Heart left ventricle (tissue), 16 donors: ENCODE measurements at regions of chr15 and their contacts with region 1.

Region 1: GRCh38 chr15:40906091-40906990 is 12.1 kb downstream of the VPS18 start:
- DNase-seq: peak; percentile 93 to 95 (median 93)
- ATAC-seq: peak; percentile 83 to 90 (median 86)
- H3K4me3 ChIP-seq: peak overlapping the region; percentile 1 to 66 (median 56)
- H3K27ac ChIP-seq: peak overlapping the region; percentile 87 to 100 (median 96)
- H3K4me1 ChIP-seq: peaks cover 4 to 76% (median 43%) of the 10 kb centered on the region in 12 donors
- H3K27me3 ChIP-seq: no peaks in the 10 kb centered on the region
- CTCF ChIP-seq: peak; percentile 72 to 96 (median 88)
- POLR2A ChIP-seq: peak in 1 of 2 donors; percentile 56

Region 2: GRCh38 chr15:40843885-40844695 is 62.3 kb before region 1 on chr15 and contains the start of gene SPINT1:
- intact Hi-C with region 1: no loop called
- DNase-seq: peak in 1 of 5 donors; percentile 61
- ATAC-seq: peak in 2 of 4 donors; percentile 26 to 34
- H3K4me3 ChIP-seq: peak within 1 kb of the TSS; percentile 26 to 68 (median 50)
- H3K27ac ChIP-seq: no peak within 1 kb of the TSS
- H3K4me1 ChIP-seq: peaks cover 0 to 37% (median 10%) of the 10 kb centered on the region in 12 donors
- H3K27me3 ChIP-seq: peaks cover 9 to 40% (median 19%) of the 10 kb centered on the region in 9 donors
- CTCF ChIP-seq: no peak
- POLR2A ChIP-seq: no peak
- total RNA-seq, gene SPINT1: 0.20 to 3.4 (median 0.76) TPM in 8 of 9 donors, not detected in the other

Region 3: DNA sequence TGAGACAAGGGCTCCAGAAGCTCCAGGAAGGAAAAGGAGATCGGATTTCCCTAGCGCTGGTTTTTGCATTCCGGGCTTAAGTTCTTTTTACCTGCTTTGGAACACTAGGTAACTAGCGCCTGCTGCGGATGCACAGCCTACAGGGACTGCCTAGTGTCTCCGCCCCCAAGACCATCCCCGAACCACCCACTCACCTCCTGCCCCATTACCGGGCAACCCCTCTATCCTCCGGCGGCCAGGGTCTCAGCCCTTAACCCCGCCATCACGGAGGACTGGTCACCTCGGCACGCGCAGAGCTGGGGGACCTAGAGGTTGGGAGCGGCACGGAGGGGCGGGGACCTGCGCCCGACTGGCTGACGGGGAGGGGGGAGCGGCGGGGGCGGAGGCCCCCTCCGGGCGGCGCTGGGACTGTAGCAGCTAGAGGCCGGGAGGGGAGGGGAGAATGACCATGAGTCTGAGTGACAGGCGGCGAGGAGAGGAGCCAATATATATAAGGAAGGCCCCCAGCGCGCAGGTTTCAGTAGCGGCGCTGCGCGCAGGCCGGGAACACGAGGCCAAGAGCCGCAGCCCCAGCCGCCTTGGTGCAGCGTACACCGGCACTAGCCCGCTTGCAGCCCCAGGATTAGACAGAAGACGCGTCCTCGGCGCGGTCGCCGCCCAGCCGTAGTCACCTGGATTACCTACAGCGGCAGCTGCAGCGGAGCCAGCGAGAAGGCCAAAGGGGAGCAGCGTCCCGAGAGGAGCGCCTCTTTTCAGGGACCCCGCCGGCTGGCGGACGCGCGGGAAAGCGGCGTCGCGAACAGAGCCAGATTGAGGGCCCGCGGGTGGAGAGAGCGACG is 22.7 kb after region 1 on chr15 and contains the start of gene DLL4:
- intact Hi-C with region 1: loop called in 5 of 10 experiments (anchors 1 to 2 kb)
- DNase-seq: peak; percentile 74 to 88 (median 82)
- ATAC-seq: peak; percentile 61 to 78 (median 65)
- H3K4me3 ChIP-seq: peak within 1 kb of the TSS; percentile 22 to 85 (median 70)
- H3K27ac ChIP-seq: peak within 1 kb of the TSS; percentile 51 to 90 (median 77)
- H3K4me1 ChIP-seq: peaks cover 3 to 80% (median 54%) of the 10 kb centered on the region in 12 donors
- H3K27me3 ChIP-seq: peaks cover 3 to 79% (median 23%) of the 10 kb centered on the region in 9 donors
- CTCF ChIP-seq: peak in 1 of 12 donors; percentile 11
- POLR2A ChIP-seq: peak in 1 of 2 donors; percentile 95
- total RNA-seq, gene DLL4: 4.7 to 20.8 (median 13.5) TPM

Region 4: GRCh38 chr15:40941528-40942336 is 35.4 kb after region 1 on chr15:
- intact Hi-C with region 1: loop called in 8 of 10 experiments (anchors 1 to 5 kb)
- DNase-seq: peak; percentile 86 to 92 (median 87)
- ATAC-seq: peak; percentile 22 to 83 (median 79)
- H3K4me3 ChIP-seq: peak overlapping the region; percentile 41 to 70 (median 59)
- H3K27ac ChIP-seq: peak overlapping the region; percentile 83 to 96 (median 92)
- H3K4me1 ChIP-seq: peaks cover 7 to 60% (median 48%) of the 10 kb centered on the region in 12 donors
- H3K27me3 ChIP-seq: no peaks in the 10 kb centered on the region
- CTCF ChIP-seq: peak; percentile 29 to 96 (median 67)
- POLR2A ChIP-seq: no peak

Region 5: GRCh38 chr15:41022487-41023090 is 116.2 kb after region 1 on chr15:
- intact Hi-C with region 1: loop called (anchors 1 to 2 kb)
- DNase-seq: peak in 2 of 5 donors; percentile 22 to 36
- ATAC-seq: peak in 3 of 4 donors; percentile 57 to 78 (median 77)
- H3K4me3 ChIP-seq: no peak overlapping the region
- H3K27ac ChIP-seq: no peak overlapping the region
- H3K4me1 ChIP-seq: peaks cover 0 to 48% (median 20%) of the 10 kb centered on the region in 12 donors
- H3K27me3 ChIP-seq: no peaks in the 10 kb centered on the region
- CTCF ChIP-seq: peak; percentile 46 to 82 (median 70)
- POLR2A ChIP-seq: no peak

Region 6: GRCh38 chr15:41061667-41062066 is 155.3 kb after region 1 on chr15:
- intact Hi-C with region 1: no loop called
- DNase-seq: no peak
- ATAC-seq: no peak
- H3K4me3 ChIP-seq: no peak overlapping the region
- H3K27ac ChIP-seq: no peak overlapping the region
- H3K4me1 ChIP-seq: no peaks in the 10 kb centered on the region
- H3K27me3 ChIP-seq: no peaks in the 10 kb centered on the region
- CTCF ChIP-seq: no peak
- POLR2A ChIP-seq: no peak

Region 7: DNA sequence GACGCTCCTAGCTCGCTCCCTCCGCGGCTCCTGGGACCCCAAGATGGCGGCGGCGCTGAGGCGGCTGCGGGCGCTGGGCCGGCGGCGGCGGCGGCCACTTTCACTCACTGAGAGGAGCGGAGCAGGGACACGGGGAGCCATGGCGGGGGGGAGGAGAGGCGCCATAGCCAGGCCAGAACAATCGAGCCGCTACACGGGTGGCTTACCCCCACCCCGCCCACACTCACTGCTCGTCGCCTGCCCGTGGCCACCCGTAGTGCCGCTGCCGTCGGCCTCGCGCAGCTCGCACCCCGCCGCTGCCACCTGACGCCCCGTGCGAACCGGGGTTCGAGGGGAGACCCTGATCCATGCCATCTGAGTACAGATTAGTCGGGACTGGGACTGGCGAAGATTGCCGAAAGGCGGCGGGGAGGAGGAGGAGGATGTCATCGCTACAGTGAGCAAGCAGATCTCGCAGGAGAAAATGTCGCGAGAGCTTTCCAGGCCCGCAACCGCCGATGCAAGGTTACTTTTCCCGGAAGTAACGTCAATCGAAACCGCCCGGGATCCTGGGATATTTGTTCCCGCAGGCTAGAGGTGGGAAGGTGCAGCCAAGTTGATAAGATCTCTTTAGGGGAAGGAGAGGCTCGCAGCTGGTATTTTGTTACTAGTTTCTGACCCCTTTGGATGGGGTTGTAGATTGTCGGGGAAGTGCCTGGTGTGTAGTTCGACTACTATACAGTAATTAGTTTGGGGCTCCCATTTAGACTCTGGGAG is 210.0 kb after region 1 on chr15 and contains the start of gene INO80:
- intact Hi-C with region 1: loop called in 4 of 10 experiments (anchors 10 kb)
- DNase-seq: peak; percentile 97 to 100 (median 99)
- ATAC-seq: peak; percentile 95 to 98 (median 96)
- H3K4me3 ChIP-seq: peak within 1 kb of the TSS; percentile 72 to 98 (median 84)
- H3K27ac ChIP-seq: peak within 1 kb of the TSS; percentile 91 to 100 (median 100)
- H3K4me1 ChIP-seq: peaks cover 0 to 24% (median 18%) of the 10 kb centered on the region in 12 donors
- H3K27me3 ChIP-seq: no peaks in the 10 kb centered on the region
- CTCF ChIP-seq: peak in 1 of 12 donors; percentile 18
- POLR2A ChIP-seq: peak in 1 of 2 donors; percentile 77
- total RNA-seq, gene INO80: 9.7 to 20.9 (median 12.6) TPM

Region 8: DNA sequence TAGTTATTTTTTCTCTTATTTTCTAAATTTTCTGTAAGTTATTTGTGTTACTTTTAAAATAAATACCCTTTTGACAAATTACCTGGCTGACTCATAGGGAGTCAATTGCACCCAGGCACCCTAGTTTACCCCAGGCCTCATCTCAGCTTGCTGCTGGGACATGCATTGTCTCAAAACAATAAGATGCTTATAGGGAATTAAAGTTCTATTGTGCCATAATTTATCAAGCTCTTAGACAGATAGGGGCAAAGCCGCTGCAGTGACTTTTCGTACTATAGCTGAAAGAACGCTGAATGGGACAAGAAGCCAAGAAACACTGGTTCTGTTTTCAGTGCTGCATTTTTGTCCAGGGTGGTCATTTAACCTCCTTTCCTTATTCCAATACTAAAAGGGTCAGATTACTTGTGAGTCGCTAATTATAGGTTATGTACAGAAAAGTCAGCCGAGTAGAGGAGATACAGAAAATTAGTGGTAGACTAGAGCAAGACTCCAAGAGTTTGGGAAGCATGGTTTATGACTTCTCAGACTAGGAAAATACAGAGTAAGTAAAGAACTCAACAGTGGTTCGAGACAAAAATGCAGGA is 274.0 kb after region 1 on chr15:
- intact Hi-C with region 1: loop called (anchors 1 to 10 kb)
- DNase-seq: no peak
- ATAC-seq: no peak
- H3K4me3 ChIP-seq: no peak overlapping the region
- H3K27ac ChIP-seq: no peak overlapping the region
- H3K4me1 ChIP-seq: no peaks in the 10 kb centered on the region
- H3K27me3 ChIP-seq: peaks cover 0 to 5% (median 0%) of the 10 kb centered on the region in 9 donors
- CTCF ChIP-seq: no peak
- POLR2A ChIP-seq: no peak

Region 9: GRCh38 chr15:41331833-41332787 is 425.8 kb after region 1 on chr15 and contains the start of gene OIP5:
- intact Hi-C with region 1: loop called in 1 of 10 experiments (anchors 10 kb)
- DNase-seq: peak; percentile 95 to 99 (median 98)
- ATAC-seq: peak; percentile 99 to 100 (median 100)
- H3K4me3 ChIP-seq: peak within 1 kb of the TSS; percentile 67 to 98 (median 84)
- H3K27ac ChIP-seq: peak within 1 kb of the TSS in 9 of 12 donors; percentile 14 to 76 (median 59)
- H3K4me1 ChIP-seq: peaks cover 0 to 27% (median 9%) of the 10 kb centered on the region in 12 donors
- H3K27me3 ChIP-seq: no peaks in the 10 kb centered on the region
- CTCF ChIP-seq: peak; percentile 36 to 77 (median 62)
- POLR2A ChIP-seq: no peak
- total RNA-seq, gene OIP5: 0.22 to 1.3 (median 0.72) TPM in 7 of 9 donors, not detected in the others